Naive thymus-derived CD4-positive, alpha-beta T cell (primary cell): ENCODE measurements at regions of chr17 and their contacts with region 1.

Region 1: DNA sequence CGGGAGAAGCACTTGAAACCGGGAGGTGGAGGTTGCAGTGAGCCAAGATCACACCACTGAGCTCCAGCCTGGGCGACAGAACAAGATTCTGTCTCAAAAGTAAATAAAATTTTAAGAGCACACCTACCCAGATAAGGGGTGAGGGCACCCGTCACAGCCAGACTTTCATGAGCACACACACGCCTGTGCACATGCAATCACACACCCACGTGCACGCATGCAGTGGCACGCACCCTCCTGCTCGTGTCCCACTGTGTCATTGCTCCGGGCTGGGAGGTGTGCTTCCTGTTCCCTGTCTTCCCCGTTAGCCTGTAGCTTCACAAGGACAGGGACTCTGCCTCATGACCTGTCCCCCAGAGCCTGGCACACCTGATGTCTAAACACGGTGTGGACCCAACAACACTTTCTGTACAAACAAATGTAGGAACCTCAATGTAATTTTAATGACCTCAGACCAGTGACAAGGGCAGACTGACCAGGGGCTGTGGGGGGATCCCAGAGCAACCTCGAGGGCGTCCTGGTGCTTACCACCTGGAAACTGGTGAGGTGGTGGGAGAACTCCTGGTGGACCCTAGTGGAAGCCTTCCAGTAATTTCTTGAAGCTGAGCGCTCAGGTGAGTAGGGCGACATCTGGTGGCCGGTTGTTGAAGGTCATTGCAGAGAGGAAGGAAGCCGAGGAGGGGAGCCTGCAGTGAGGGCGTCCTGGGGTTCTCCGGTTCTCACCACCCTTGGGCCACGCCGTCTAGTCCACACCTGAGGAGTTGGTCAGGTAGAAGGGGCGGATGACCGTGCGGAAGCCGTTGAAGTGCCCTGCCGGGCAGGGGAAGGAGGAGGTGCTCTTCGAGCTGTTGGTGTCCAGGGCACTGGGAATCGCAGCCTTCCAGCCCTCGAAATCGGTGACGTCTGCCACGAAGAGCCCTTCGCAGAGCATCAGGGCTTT is 8.6 kb downstream of the LGALS3BP start:
- DNase-seq: peak; percentile 55 to 81 (median 70)
- ATAC-seq: peak; percentile 86
- H3K4me3 ChIP-seq: no peak overlapping the region
- H3K4me3 Mint-ChIP-seq: no peak overlapping the region
- H3K27ac ChIP-seq: no peak overlapping the region
- H3K27ac Mint-ChIP-seq: peak overlapping the region; percentile 5 to 93 (median 75)
- H3K4me1 ChIP-seq: peaks cover 0 to 6% of the 10 kb centered on the region in 2 donors
- H3K4me1 Mint-ChIP-seq: peaks cover 7 to 20% (median 11%) of the 10 kb centered on the region in 7 donors
- H3K27me3 ChIP-seq: no peaks in the 10 kb centered on the region
- H3K27me3 Mint-ChIP-seq: no peaks in the 10 kb centered on the region

Region 2: DNA sequence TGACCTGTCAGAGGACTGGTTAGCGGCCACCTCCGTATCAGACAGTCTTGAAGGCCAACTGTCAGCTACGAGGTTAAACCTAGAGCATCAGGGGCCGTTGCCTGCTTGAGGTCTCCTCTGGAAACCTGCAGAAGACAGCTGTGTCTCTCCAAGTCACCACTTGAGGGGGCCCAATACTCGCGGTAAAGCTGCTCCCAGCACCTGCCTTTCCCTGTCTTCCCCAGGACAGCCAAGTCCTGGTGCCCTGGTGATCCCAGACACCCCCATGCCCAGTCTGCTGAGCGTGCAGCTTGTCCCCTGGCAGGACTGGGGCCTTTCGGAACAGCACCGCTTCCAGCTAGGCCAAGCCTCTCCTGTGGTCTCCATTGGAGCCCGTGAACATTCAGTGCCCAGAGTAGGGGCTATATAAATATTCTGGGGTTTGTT is 474.0 kb before region 1 on chr17:
- CTCF ChIA-PET with region 1: interaction called, 12 read pairs
- POLR2A ChIA-PET with region 1: no interaction called
- intact Hi-C with region 1: no loop called
- DNase-seq: peak in 8 of 9 donors; percentile 21 to 64 (median 48)
- ATAC-seq: peak; percentile 76
- H3K4me3 ChIP-seq: no peak overlapping the region
- H3K4me3 Mint-ChIP-seq: no peak overlapping the region
- H3K27ac ChIP-seq: no peak overlapping the region
- H3K27ac Mint-ChIP-seq: no peak overlapping the region
- H3K4me1 ChIP-seq: no peaks in the 10 kb centered on the region
- H3K4me1 Mint-ChIP-seq: peaks cover 0 to 2% (median 0%) of the 10 kb centered on the region in 7 donors
- H3K27me3 ChIP-seq: no peaks in the 10 kb centered on the region
- H3K27me3 Mint-ChIP-seq: peaks cover 0 to 4% (median 0%) of the 10 kb centered on the region in 5 donors

Region 3: GRCh38 chr17:78736526-78737079 is 234.5 kb before region 1 on chr17:
- CTCF ChIA-PET with region 1: no interaction called
- POLR2A ChIA-PET with region 1: no interaction called
- intact Hi-C with region 1: no loop called
- DNase-seq: peak; percentile 45 to 82 (median 78)
- ATAC-seq: peak; percentile 91
- H3K4me3 ChIP-seq: peak overlapping the region; percentile 75
- H3K4me3 Mint-ChIP-seq: peak overlapping the region; percentile 90 to 97 (median 94)
- H3K27ac ChIP-seq: peak overlapping the region; percentile 79
- H3K27ac Mint-ChIP-seq: peak overlapping the region; percentile 88 to 95 (median 92)
- H3K4me1 ChIP-seq: peaks cover 71 to 80% of the 10 kb centered on the region in 2 donors
- H3K4me1 Mint-ChIP-seq: peaks cover 78 to 97% (median 88%) of the 10 kb centered on the region in 7 donors
- H3K27me3 ChIP-seq: no peaks in the 10 kb centered on the region
- H3K27me3 Mint-ChIP-seq: no peaks in the 10 kb centered on the region

Region 4: GRCh38 chr17:78865682-78866390 is 105.3 kb before region 1 on chr17:
- CTCF ChIA-PET with region 1: interaction called, 25 read pairs
- POLR2A ChIA-PET with region 1: interaction called, 5 read pairs
- intact Hi-C with region 1: loop called (anchors 1 kb)
- DNase-seq: peak in 8 of 9 donors; percentile 31 to 73 (median 50)
- ATAC-seq: peak; percentile 63
- H3K4me3 ChIP-seq: no peak overlapping the region
- H3K4me3 Mint-ChIP-seq: no peak overlapping the region
- H3K27ac ChIP-seq: no peak overlapping the region
- H3K27ac Mint-ChIP-seq: no peak overlapping the region
- H3K4me1 ChIP-seq: no peaks in the 10 kb centered on the region
- H3K4me1 Mint-ChIP-seq: peaks cover 0 to 6% (median 4%) of the 10 kb centered on the region in 7 donors
- H3K27me3 ChIP-seq: no peaks in the 10 kb centered on the region
- H3K27me3 Mint-ChIP-seq: peaks cover 0 to 4% (median 0%) of the 10 kb centered on the region in 5 donors

Region 5: DNA sequence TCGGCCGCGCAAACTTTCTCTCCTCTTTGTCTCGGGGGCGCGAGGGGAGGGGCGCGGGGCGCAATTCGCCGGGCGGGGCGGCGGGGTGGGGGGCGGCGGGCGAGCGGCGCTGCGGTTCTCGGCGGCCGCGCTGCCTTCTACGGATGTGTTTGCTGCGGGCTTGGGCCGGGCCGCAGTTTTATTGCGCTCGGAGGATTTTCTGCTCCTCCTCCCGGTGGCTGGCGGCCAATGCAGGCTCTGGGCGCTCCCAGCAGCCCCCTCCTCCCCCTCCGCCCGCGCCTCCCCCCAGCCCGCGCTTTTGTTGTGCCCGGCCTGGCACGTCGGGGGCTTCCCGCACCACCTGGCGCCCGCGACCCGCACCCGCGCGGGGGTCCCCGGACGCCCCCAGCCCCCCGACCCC is 45.9 kb before region 1 on chr17 and contains the start of gene TIMP2:
- CTCF ChIA-PET with region 1: no interaction called
- POLR2A ChIA-PET with region 1: no interaction called
- intact Hi-C with region 1: loop called in 1 of 2 experiments (anchors 5 kb)
- DNase-seq: peak; percentile 54 to 78 (median 74)
- ATAC-seq: peak; percentile 89
- H3K4me3 ChIP-seq: peak within 1 kb of the TSS; percentile 49
- H3K4me3 Mint-ChIP-seq: peak within 1 kb of the TSS; percentile 62 to 88 (median 80)
- H3K27ac ChIP-seq: peak within 1 kb of the TSS; percentile 32
- H3K27ac Mint-ChIP-seq: peak within 1 kb of the TSS in 1 of 9 donors; percentile 3
- H3K4me1 ChIP-seq: peaks cover 0 to 7% of the 10 kb centered on the region in 2 donors
- H3K4me1 Mint-ChIP-seq: peaks cover 7 to 19% (median 12%) of the 10 kb centered on the region in 7 donors
- H3K27me3 ChIP-seq: no peaks in the 10 kb centered on the region
- H3K27me3 Mint-ChIP-seq: peaks cover 0 to 48% (median 0%) of the 10 kb centered on the region in 5 donors
- total RNA-seq, gene TIMP2: 1.2 to 46.1 (median 5.8) TPM